HEK293T (cell line): ENCODE measurements at regions of chr4 and their contacts with region 1.

Region 1: DNA sequence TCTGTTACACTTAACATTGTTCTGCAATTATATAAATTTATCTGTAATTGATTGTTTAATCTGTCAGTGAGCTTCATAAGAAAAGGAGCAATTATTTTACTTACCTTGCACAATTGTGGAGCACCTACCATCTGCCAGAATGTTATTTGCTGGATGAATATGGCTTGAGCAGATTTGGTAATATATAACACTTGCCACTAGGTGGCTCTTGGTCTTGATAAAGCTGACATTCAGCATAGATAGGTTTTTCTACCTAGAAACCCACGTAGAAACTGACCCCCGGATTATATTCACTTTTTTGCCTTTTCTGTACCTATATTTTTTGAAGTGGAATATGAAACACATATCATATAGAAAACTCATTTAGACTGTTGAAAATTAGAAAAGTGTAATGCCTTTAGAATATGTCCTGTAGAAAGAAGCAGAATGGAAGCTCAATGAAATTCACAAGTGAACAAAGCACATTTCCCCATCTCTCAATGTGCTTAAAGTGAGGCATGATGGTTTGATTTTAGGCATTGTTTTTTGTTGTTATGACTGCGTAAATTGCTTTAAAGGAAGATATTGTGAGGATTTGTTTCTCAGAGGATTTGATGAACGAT is 9.5 kb downstream of the RBPJ start:
- DNase-seq: peak; percentile 19

Region 2: DNA sequence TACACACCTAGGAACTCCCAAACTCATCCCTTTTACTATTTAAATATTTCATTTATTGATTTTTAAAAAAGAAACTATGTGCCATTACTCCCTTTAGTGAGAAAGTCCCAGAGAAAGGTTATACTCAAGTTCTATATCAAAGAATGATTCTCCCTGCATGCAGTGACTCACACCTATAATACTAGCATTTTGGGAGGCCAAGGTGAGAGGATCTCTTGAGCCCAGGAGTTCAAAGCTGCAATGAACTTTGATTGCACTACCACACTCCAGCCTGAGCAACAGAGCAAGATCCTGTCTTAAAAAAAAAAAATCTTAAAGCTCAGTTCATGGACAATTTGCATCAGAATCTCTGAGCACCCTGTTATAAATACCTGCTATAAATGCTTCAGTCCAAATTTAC is 18.7 kb before region 1 on chr4:
- CTCF ChIA-PET with region 1: no interaction called
- POLR2A ChIA-PET with region 1: no interaction called
- DNase-seq: no peak

Region 3: DNA sequence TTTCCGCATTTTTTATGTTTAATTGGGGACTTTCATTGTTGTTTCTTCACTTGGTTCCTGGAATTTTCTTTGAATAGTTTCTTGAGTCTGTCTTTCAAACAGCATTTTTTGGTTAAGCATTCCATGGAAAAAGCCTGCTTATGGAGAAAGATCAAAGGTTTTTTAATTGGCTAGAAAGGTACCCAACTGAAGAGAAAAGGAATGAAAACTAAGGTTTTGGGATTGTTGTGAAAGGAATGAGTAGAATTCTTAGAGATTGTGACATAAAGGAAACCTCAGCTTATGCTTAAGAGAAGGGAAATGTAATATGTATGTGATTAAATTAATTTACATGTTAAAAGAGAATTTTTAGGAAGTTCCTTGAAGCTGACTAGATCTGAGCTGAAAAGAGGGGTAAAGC is 77.2 kb after region 1 on chr4:
- CTCF ChIA-PET with region 1: interaction called, 10 read pairs
- POLR2A ChIA-PET with region 1: no interaction called
- DNase-seq: no peak